ENCODE measurements at regions of chr9 and their contacts with region 1.

Region 1: GRCh38 chr9:76658535-76659231 is 105.6 kb upstream of the PCA3 start:
- DNase-seq: no peak
- ATAC-seq: peak; percentile 79

Region 2: DNA sequence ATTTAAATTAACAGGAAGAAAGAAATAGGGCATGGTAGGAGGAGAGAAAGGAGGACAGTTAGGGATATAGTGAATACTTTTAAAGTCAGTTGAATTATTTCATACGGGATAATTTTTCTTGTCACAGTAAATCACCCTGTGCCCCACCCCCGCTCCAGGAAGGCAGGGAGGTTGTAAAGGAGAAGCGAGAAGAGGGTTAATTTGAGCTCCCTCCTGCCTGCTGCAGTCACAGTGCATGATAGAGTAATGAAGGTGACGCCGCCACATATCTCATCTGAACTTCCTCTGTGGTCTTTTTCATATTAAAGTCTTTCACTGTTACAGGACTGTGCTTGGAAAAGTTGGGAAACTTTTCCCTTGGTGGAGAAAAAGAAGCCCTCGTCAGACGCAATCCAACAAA is 769.1 kb before region 1 on chr9:
- intact Hi-C with region 1: no loop called
- DNase-seq: no peak
- ATAC-seq: no peak

Region 3: GRCh38 chr9:76445976-76446375 is 212.7 kb before region 1 on chr9:
- intact Hi-C with region 1: loop called (anchors 5 kb)
- DNase-seq: no peak
- ATAC-seq: no peak

Region 4: GRCh38 chr9:76592091-76593010 is 66.3 kb before region 1 on chr9:
- intact Hi-C with region 1: no loop called
- DNase-seq: no peak
- ATAC-seq: no peak

Region 5: GRCh38 chr9:76732341-76732958 is 73.8 kb after region 1 on chr9:
- intact Hi-C with region 1: no loop called
- DNase-seq: no peak
- ATAC-seq: no peak

Measured in left ventricle myocardium superior (tissue), 1 donor.